Activated CD4-positive, alpha-beta T cell treated with anti-CD3 and anti-CD28 coated beads for 36 hours (primary cell): ENCODE measurements at regions of chr5 and their contacts with region 1.

Region 1: DNA sequence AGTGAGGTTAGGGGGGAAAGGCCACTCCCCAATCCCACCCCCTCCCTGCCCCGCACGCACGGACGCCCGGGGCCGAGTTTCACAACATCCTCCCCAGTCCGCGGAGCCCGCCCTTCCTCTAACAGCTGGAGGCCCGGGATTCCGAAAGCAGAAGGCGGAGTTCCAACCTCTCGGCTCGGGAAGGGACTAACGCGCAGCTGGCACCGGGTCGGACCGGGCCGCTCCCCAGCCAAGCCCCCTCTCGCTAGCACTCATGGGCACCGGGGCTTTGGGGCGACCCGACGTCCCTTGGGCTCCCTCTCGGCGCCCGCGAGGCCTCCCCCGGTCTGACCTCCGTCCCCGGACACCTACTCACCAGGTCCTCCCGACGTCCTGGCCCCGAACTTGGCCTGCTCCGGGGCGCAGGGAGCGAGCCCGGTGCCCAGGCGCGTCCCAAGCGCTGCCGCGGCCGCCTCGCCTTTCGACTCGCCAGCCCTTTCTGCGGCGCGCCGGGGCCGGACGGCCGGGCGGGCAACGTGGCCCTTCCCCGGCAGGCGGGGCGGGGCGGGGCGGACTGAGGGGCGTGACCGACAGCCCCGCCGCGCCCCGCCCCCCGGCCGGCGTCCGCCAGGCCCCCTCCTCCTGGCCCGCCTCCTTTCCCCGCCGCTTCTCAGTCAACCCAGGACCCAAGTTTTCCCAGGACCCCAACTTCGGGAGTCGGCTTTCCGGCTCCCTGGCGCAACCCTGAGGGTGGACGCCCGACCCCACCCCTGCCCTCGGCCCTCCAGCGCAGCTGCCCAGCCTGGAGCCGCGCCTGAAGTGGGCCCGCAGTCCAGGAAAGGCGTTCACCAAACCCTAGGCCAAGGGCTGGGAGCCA is at the start of gene MGAT1:
- DNase-seq: peak; percentile 90
- ATAC-seq: peak; percentile 46
- H3K4me3 Mint-ChIP-seq: peak within 1 kb of the TSS; percentile 91
- H3K27ac Mint-ChIP-seq: peak within 1 kb of the TSS; percentile 89
- H3K4me1 Mint-ChIP-seq: peaks cover 77% of the 10 kb centered on the region
- H3K27me3 Mint-ChIP-seq: no peaks in the 10 kb centered on the region
- total RNA-seq, gene MGAT1: 93.2 to 125 TPM

Region 2: GRCh38 chr5:180825768-180826525 is 23.4 kb after region 1 on chr5:
- CTCF ChIA-PET with region 1: interaction called, 20 read pairs
- POLR2A ChIA-PET with region 1: interaction called, 4 read pairs
- intact Hi-C with region 1: loop called in 1 of 2 experiments (anchors 1 kb)
- DNase-seq: peak; percentile 82
- ATAC-seq: peak; percentile 77
- H3K4me3 Mint-ChIP-seq: no peak overlapping the region
- H3K27ac Mint-ChIP-seq: peak overlapping the region; percentile 51
- H3K4me1 Mint-ChIP-seq: peaks cover 56% of the 10 kb centered on the region
- H3K27me3 Mint-ChIP-seq: no peaks in the 10 kb centered on the region

Region 3: DNA sequence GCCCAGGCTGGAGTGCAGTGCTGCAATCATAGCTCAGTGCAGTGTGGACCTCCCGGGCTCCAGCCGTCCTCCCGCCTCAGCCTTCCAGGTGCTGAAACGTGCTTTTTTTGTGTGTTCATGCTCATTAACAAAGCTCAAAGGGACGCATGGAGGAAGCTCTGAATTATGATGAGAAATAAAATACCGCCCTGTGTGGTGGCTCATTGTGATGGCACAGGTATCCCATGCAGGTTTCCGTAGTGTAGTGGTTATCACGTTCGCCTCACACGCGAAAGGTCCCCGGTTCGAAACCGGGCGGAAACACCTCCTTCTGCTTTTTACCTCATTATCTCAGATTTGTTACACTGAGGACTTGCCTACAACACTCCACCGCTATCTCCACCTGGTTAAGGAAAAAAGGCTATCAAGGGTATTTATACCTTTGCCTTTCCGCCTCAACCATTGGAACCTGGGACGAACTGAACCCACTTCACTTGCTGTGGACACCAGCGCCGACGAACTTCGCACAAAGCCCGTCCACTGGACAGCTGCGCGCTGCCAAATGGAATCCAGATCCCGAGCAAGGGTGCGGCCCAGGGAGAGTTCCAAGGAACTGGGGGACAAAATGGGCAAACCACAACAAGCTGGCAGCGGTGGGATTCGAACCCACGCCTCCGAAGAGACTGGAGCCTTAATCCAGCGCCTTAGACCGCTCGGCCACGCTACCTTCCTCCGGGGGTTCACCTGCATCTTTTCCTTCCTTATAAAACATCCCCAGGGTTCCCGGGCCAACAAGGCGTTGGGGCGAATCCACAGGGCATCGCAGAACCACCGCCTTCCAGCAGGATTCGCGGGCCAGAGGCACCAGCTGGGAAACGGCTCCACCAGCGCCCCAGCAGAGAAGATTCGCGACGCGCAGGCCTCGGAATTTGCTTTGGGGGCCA is 371.1 kb after region 1 on chr5:
- CTCF ChIA-PET with region 1: no interaction called
- POLR2A ChIA-PET with region 1: no interaction called
- intact Hi-C with region 1: loop called in 1 of 2 experiments (anchors 5 kb)
- DNase-seq: peak; percentile 86
- ATAC-seq: peak; percentile 80
- H3K4me3 Mint-ChIP-seq: peak overlapping the region; percentile 77
- H3K27ac Mint-ChIP-seq: peak overlapping the region; percentile 94
- H3K4me1 Mint-ChIP-seq: peaks cover 47% of the 10 kb centered on the region
- H3K27me3 Mint-ChIP-seq: peaks cover 19% of the 10 kb centered on the region

Region 4: GRCh38 chr5:181243512-181244343 is 441.2 kb after region 1 on chr5 and contains the start of gene RACK1:
- CTCF ChIA-PET with region 1: no interaction called
- POLR2A ChIA-PET with region 1: no interaction called
- intact Hi-C with region 1: loop called in 1 of 2 experiments (anchors 2 kb)
- DNase-seq: peak; percentile 94
- ATAC-seq: peak; percentile 70
- H3K4me3 Mint-ChIP-seq: peak within 1 kb of the TSS; percentile 91
- H3K27ac Mint-ChIP-seq: peak within 1 kb of the TSS; percentile 99
- H3K4me1 Mint-ChIP-seq: peaks cover 50% of the 10 kb centered on the region
- H3K27me3 Mint-ChIP-seq: no peaks in the 10 kb centered on the region
- total RNA-seq, gene RACK1: 2,724 to 3,901 TPM

Region 5: GRCh38 chr5:181260387-181261319 is 458.1 kb after region 1 on chr5 and contains the start of gene TRIM52:
- CTCF ChIA-PET with region 1: no interaction called
- POLR2A ChIA-PET with region 1: no interaction called
- intact Hi-C with region 1: loop called in 1 of 2 experiments (anchors 2 kb)
- DNase-seq: peak; percentile 95
- ATAC-seq: peak; percentile 85
- H3K4me3 Mint-ChIP-seq: peak within 1 kb of the TSS; percentile 91
- H3K27ac Mint-ChIP-seq: peak within 1 kb of the TSS; percentile 95
- H3K4me1 Mint-ChIP-seq: peaks cover 38% of the 10 kb centered on the region
- H3K27me3 Mint-ChIP-seq: no peaks in the 10 kb centered on the region
- total RNA-seq, gene TRIM52: 10.4 to 13.1 TPM